ENCODE measurements at regions of chr6 and their contacts with region 1.

Region 1: DNA sequence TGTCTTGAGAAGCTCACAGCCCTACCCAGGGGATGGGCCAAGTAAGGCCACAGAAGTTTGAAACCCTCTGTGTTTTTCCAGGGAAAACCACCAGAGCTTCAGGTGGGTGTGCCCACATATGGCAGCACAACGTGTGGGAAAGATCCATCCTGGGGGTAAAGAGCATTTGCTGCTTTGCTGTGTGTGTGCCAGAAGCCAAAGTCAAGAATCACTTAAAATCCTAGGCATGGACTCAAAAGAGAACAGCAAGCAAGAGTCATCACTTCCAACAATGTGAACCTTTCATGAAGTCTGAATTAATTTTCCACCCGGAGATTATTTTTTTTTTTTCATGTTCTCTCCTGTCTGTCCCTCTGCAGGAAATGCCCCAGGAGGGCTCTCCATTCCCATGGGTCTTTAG is 308.2 kb upstream of the SGK1 start:
- DNase-seq: no peak
- ATAC-seq: no peak
- H3K4me3 ChIP-seq: no peak overlapping the region
- H3K27ac ChIP-seq: no peak overlapping the region
- H3K4me1 ChIP-seq: peaks cover 0 to 28% of the 10 kb centered on the region in 2 donors
- H3K27me3 ChIP-seq: no peaks in the 10 kb centered on the region
- CTCF ChIP-seq: no peak
- POLR2A ChIP-seq: no peak

Region 2: DNA sequence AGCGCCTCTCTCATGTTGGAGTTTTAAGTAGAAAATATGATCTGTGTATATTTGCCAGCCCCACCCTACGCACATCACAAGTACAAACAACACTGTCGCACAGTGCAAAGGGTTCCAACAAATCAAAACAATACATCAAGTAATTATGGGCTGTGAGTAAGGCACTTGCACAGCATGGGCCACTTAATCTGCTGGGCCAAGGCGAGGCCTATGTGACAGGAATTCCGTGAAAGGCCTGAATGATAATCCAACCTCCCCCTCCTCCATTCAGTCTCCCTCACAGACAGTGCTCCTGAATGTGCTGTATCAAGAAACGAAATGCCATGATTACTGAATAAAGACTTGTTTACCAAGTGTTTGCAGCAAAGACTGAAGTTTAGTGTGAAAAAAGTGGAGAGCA is 443.6 kb before region 1 on chr6:
- in situ Hi-C with region 1: loop called in 1 of 4 experiments (anchors 5 kb)
- intact Hi-C with region 1: no loop called
- DNase-seq: no peak
- ATAC-seq: no peak
- H3K4me3 ChIP-seq: no peak overlapping the region
- H3K27ac ChIP-seq: no peak overlapping the region
- H3K4me1 ChIP-seq: peaks cover 1 to 7% of the 10 kb centered on the region in 2 donors
- H3K27me3 ChIP-seq: no peaks in the 10 kb centered on the region
- CTCF ChIP-seq: no peak
- POLR2A ChIP-seq: no peak

Measured in gastrocnemius medialis (tissue), 4 donors.